OCI-LY7 (cell line): ENCODE measurements at regions of chr6 and their contacts with region 1.

Region 1: DNA sequence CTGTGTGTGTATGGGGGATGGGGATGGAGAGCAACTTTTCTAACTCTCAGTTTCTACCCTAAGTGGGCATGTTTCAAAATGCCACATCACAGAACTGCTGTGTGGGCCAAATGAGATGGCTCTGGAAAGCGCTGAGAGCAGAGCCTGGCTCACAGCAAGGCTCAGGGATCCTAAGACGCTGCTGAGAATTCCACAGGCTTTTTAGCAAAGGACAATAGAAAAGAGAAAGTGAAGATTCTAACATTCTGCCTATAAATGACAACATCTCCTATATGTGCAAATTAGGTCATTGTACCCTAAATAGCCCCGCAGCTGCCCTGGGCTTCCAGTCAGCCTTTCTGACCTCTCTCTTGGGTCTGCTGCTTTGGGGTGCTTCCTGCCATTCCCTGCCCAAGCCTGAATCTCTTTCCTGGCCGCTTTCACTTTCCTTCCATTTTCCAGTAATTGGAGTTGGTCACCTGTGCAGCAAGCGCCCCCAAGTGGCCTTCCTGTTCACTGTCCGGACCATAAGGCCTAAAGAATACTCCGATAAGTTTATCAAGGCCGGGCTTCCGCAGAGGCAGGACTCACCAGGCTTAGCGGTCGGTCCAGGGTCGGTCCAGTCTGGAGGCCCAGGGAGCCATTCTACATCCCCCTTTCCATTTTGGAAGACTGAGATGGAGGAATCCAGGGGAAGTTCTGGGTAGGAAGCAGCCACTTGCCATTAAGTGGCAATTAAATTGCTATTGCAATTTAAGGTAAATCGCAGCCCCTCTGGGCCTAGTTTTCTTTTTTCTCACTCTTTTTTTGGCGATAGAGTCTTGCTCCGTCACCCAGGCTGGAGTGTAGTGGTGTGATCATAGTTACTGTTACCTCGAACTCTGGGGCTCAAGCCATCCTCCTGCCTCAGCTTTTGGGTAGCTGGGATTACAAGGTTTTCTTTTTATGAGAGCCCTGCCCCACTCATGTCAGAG is 6.6 kb upstream of the DDR1 start:
- DNase-seq: peak; percentile 76
- H3K4me3 ChIP-seq: peak overlapping the region; percentile 48
- H3K27ac ChIP-seq: no peak overlapping the region
- H3K4me1 ChIP-seq: peaks cover 25% of the 10 kb centered on the region
- CTCF ChIP-seq: peak; percentile 97

Region 2: DNA sequence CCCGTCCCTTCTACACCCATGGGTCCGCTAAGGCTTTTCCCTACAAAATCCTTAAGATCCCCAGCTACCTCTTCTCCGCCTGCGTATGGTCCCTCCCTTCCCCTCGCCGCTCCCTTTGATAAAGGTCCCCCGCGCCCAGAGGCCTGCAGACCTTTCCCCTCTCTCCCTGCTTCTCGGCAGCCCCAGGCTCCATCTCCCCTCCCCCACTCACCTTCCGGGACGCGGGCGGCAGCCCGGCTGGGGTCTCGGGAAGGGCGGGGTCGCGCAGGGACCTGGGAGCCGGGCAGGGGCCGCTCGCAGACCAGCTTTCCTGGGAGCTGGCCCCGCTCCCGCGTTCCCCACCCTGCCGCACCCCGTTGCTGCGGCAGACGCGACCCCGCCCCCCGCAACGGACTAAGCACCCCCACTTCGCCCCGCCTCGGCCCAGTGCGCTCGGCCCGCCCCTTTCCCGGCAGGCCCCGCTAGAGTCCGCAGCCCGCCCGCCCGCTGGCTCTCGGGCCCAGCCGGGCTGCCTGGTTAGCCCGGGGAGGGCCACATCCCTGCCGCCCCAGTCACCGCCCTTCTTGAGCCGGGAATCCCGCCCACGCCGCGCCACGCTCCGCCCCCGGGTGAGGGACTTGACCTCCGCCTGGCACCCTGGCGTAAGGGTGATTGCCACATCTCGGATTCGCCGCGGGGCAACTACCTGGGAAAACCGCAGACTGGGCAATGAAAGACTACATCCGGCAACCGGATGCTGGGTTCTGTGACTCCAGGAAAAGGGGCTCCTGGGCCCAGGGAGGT is 135.2 kb before region 1 on chr6 and contains the start of gene FLOT1:
- CTCF ChIA-PET with region 1: no interaction called
- POLR2A ChIA-PET with region 1: interaction called, 3 read pairs
- intact Hi-C with region 1: loop called (anchors 1 kb)
- DNase-seq: peak; percentile 84
- H3K4me3 ChIP-seq: peak within 1 kb of the TSS; percentile 91
- H3K27ac ChIP-seq: peak within 1 kb of the TSS; percentile 50
- H3K4me1 ChIP-seq: peaks cover 31% of the 10 kb centered on the region
- CTCF ChIP-seq: 0 out of 2 replicates have a peak, but pooled peaks have one; percentile 23
- total RNA-seq, gene FLOT1: 66.7 and 70.7 TPM in 2 replicates

Region 3: DNA sequence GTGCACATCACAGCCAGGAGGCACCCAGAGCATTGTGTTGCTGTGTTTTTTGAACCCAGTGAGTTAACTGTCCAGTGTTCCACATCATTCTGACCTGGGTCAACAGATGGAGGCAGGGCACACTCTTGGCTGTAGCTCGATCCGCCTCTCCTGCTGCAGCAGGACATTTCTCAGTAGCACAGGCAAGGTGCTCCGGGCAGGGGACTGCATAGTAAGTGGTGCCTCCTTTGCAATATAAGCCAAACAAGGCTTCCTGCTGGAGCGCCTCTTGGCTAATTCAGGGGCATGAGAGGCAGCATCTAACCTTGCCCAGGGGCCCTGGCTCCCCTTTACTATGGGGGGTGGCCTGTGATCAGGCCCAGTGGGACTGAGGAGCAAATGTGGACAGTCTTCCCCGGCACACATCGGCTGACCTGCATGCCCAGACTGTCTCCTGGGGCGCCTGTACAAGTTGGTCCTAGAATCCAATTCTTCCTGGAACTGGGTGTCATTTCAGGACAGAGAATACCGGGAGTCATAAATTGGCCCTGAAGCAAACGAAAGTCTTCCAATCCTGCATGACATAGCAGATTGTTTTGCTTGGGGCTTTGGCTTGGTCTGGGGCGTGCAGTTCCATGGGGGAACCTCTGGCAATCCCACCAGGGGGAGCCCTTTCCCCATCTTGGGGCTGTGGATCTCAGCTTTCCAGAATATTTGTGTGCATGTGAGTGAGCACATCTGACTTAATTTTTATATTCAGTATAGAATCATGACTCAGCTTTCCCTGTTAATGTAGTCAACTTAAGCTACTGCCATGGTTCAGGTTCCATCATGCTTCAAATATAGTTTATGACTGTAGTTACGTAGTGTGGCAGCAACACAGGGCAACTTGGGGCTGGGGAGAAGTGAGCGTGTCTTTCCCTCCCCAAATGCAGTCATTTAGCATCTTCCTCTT is 49.4 kb before region 1 on chr6:
- CTCF ChIA-PET with region 1: interaction called, 5 read pairs
- POLR2A ChIA-PET with region 1: interaction called, 8 read pairs
- intact Hi-C with region 1: loop called (anchors 1 kb)
- DNase-seq: peak; percentile 77
- H3K4me3 ChIP-seq: no peak overlapping the region
- H3K27ac ChIP-seq: no peak overlapping the region
- H3K4me1 ChIP-seq: peaks cover 11% of the 10 kb centered on the region
- CTCF ChIP-seq: peak; percentile 96